Transverse colon (tissue), 4 donors: ENCODE measurements at regions of chr1 and their contacts with region 1.

Region 1: DNA sequence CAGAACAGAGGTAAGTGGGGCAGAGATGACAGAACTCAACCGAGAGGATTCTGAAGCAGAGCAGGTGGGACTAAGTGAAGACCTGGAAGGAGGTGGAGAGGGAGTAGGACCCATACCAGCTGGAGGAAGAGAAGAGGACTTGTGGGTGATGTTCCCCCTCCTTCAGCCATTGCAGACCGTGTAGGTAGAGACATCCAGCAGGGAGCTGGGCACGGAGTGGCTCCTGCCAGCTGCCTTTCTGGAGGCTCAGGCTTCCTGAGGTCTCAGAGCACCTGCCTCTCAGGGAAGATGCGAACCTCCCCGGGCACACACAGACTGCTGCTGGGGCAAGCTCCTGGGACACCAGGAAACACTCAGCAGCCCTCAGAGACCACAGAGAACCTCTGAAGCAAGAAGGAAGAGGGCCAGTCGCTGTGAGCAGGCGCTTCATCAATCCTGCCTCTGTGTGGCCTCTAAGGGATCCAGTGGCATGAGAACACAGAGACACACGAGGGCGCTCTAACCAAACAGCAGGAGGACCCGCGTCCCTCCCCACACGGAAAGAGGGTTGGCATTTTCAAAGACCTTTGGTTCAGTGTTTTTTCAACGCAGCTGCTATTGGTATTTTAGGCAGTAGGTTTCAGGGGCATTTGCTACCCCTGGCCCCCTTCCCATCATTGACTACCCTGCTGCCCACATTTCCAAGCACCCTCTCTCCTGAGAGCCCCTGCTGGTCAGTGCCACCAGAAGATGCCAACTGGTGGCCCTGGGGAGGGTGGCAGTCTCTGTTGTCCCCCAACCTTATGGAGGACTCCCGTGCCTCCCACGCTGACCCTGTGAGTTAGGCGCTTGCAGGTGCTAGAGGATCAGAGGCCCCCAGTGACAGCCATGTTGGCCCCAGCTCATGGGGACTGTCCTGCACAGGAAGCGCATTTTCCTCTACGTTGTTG is 89.6 kb upstream of the EDN2 start:
- DNase-seq: peak; percentile 79
- H3K4me3 ChIP-seq: no peak overlapping the region
- H3K27ac ChIP-seq: no peak overlapping the region
- H3K4me1 ChIP-seq: peaks cover 0 to 3% (median 0%) of the 10 kb centered on the region in 4 donors
- H3K27me3 ChIP-seq: no peaks in the 10 kb centered on the region
- CTCF ChIP-seq: peak; percentile 72 to 81 (median 74)
- EP300 ChIP-seq: no peak
- POLR2A ChIP-seq: no peak

Region 2: DNA sequence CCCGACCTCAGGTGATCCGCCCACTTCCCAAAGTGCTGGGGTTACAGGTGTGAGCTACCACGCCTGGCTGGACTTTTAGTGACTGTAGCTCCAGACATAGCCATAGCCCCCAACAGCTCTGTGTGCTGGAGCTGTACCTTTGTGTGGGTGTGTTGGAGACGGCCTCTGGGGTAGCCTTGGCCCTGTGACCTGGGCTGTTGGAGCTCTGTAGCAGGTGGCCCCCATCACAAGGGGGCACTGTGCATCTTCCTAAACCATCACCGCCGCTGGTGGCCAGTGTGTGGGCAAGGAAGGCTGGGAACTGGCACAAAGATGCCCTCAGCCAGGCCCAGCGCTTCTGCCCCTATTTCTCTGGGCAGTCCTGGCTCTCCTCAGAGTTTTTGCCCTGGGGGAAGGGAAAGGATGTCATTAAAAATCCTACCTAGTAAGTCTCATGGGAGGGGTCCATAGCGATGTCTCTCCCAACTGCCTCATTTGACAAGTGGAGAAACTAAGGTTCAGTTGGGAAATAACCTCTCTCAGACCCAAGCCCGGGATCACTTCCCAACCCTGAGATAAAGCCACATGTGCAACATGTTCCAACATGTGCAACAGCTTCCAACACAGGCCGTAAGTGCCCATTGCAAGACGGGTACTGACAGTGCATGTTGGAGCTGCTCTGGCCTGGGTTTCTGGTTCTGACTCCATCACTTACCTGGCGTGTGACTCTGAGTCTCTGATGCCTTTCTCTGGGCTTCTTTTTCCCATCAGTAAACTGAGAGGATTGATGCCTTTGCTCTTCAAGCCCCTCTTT is 251.0 kb before region 1 on chr1:
- in situ Hi-C with region 1: no loop called
- intact Hi-C with region 1: no loop called
- DNase-seq: peak; percentile 56
- H3K4me3 ChIP-seq: no peak overlapping the region
- H3K27ac ChIP-seq: no peak overlapping the region
- H3K4me1 ChIP-seq: peaks cover 0 to 6% (median 3%) of the 10 kb centered on the region in 4 donors
- H3K27me3 ChIP-seq: no peaks in the 10 kb centered on the region
- CTCF ChIP-seq: peak; percentile 21 to 74 (median 47)
- EP300 ChIP-seq: no peak
- POLR2A ChIP-seq: no peak

Region 3: GRCh38 chr1:41371630-41372599 is 202.1 kb before region 1 on chr1:
- in situ Hi-C with region 1: no loop called
- intact Hi-C with region 1: no loop called
- DNase-seq: no peak
- H3K4me3 ChIP-seq: no peak overlapping the region
- H3K27ac ChIP-seq: no peak overlapping the region
- H3K4me1 ChIP-seq: peaks cover 6 to 16% (median 8%) of the 10 kb centered on the region in 4 donors
- H3K27me3 ChIP-seq: peaks cover 5% of the 10 kb centered on the region
- CTCF ChIP-seq: no peak
- EP300 ChIP-seq: no peak
- POLR2A ChIP-seq: no peak

Region 4: GRCh38 chr1:42146626-42147320 is 572.7 kb after region 1 on chr1:
- in situ Hi-C with region 1: loop called in 1 of 4 experiments (anchors 25 kb)
- intact Hi-C with region 1: no loop called
- DNase-seq: peak; percentile 91
- H3K4me3 ChIP-seq: no peak overlapping the region
- H3K27ac ChIP-seq: no peak overlapping the region
- H3K4me1 ChIP-seq: no peaks in the 10 kb centered on the region
- H3K27me3 ChIP-seq: peaks cover 24% of the 10 kb centered on the region
- CTCF ChIP-seq: peak; percentile 68 to 99 (median 79)
- EP300 ChIP-seq: peak; percentile 32
- POLR2A ChIP-seq: no peak